ENCODE measurements at regions of chr19 and their contacts with region 1.

Region 1: GRCh38 chr19:1636325-1637236 is 15.8 kb downstream of the TCF3 start:
- DNase-seq: no peak
- ATAC-seq: no peak
- H3K4me3 ChIP-seq: no peak overlapping the region
- H3K4me3 Mint-ChIP-seq: no peak overlapping the region
- H3K27ac ChIP-seq: no peak overlapping the region
- H3K27ac Mint-ChIP-seq: no peak overlapping the region
- H3K4me1 ChIP-seq: no peaks in the 10 kb centered on the region
- H3K4me1 Mint-ChIP-seq: peaks cover 10% of the 10 kb centered on the region
- H3K27me3 ChIP-seq: no peaks in the 10 kb centered on the region
- H3K27me3 Mint-ChIP-seq: no peaks in the 10 kb centered on the region
- CTCF ChIP-seq: no peak

Region 2: GRCh38 chr19:1956868-1957492 is 320.4 kb after region 1 on chr19:
- CTCF ChIA-PET with region 1: no interaction called
- POLR2A ChIA-PET with region 1: no interaction called
- intact Hi-C with region 1: loop called in 1 of 2 experiments (anchors 5 kb)
- DNase-seq: no peak
- ATAC-seq: no peak
- H3K4me3 ChIP-seq: no peak overlapping the region
- H3K4me3 Mint-ChIP-seq: no peak overlapping the region
- H3K27ac ChIP-seq: no peak overlapping the region
- H3K27ac Mint-ChIP-seq: no peak overlapping the region
- H3K4me1 ChIP-seq: no peaks in the 10 kb centered on the region
- H3K4me1 Mint-ChIP-seq: peaks cover 25% of the 10 kb centered on the region
- H3K27me3 ChIP-seq: no peaks in the 10 kb centered on the region
- H3K27me3 Mint-ChIP-seq: no peaks in the 10 kb centered on the region
- CTCF ChIP-seq: no peak

Measured in CD8-positive, alpha-beta T cell (primary cell).